Activated T-helper 1 cell treated with anti-CD3 and anti-CD28 coated beads, Interleukin-12 subunit alpha, Interleukin-12 subunit beta, Interleukin-2, Interleukin-4 antibody, amounts not matched to agents 30 ng/mL and 10 ng/mL and 1 ng/mL, durations not matched to agents 14 hours and 24 hours and 36 hours (primary cell): ENCODE measurements at regions of chr6 and their contacts with region 1.

Region 1: DNA sequence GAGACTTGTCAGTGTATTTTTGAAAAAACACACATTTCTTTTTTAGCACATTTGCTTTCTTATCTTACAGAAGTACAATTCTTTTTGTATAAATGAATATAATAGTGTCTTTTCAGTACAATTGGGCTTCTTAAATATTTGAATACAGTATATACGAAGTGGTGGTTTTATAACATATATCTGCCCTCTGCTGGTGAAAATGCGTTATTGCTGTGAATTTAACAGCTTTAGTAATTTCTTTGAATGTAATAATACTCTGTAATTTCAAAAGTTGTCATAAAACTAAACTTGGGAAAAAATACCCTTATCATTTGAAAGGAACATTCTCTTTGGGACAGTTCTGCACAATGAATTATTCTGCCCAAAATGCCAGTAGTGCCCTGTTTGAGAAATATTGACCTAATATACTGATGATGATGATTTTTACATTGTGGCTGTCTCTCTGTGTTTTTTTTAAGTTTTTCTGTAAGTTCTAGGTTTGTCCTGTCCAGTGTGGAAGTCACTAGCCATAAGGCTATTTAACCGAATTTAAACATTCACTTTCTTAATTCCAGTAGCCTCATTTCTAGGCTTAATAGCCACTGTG is 19.0 kb downstream of the SMAP1 start:
- DNase-seq: no peak
- H3K4me3 Mint-ChIP-seq: no peak overlapping the region
- H3K27ac Mint-ChIP-seq: no peak overlapping the region
- H3K4me1 Mint-ChIP-seq: peaks cover 42% of the 10 kb centered on the region
- H3K27me3 Mint-ChIP-seq: no peaks in the 10 kb centered on the region

Region 2: GRCh38 chr6:70310063-70310694 is 376.5 kb before region 1 on chr6:
- intact Hi-C with region 1: loop called (anchors 5 kb)
- DNase-seq: no peak
- H3K4me3 Mint-ChIP-seq: no peak overlapping the region
- H3K27ac Mint-ChIP-seq: no peak overlapping the region
- H3K4me1 Mint-ChIP-seq: peaks cover 6% of the 10 kb centered on the region
- H3K27me3 Mint-ChIP-seq: peaks cover 4% of the 10 kb centered on the region

Region 3: DNA sequence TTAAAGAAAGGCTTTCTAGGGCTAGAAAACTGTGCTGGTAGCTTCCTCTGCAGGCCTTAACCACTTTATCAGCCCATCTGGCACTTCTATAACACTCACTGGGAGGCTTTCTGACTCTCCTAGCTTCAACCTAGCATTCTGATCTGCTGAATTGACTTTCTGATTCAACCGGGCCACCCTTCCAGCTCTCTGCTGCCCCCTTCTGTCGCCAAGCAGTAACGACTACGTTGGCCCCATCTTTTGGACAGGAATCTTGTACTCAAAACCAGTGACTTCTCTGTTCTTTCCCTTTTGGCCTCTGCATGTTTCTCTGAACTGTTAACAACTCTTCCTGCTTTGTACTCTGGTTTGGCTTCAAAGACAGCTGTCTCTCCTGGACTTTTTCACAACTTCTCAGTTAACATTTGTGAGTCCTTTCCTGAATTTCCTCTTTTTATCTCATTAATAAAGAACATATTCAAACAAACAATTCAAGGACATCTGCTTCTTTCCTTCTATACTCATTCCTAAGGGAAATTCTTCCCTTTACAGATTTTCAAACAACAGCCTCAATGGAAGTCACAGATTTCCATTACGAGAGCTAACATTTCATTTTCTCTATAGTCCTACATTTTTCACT is 317.2 kb before region 1 on chr6:
- intact Hi-C with region 1: loop called (anchors 1 kb)
- DNase-seq: peak; percentile 43
- H3K4me3 Mint-ChIP-seq: no peak overlapping the region
- H3K27ac Mint-ChIP-seq: no peak overlapping the region
- H3K4me1 Mint-ChIP-seq: no peaks in the 10 kb centered on the region
- H3K27me3 Mint-ChIP-seq: peaks cover 24% of the 10 kb centered on the region

Region 4: GRCh38 chr6:70520575-70520974 is 166.1 kb before region 1 on chr6:
- intact Hi-C with region 1: loop called (anchors 1 kb)
- DNase-seq: no peak
- H3K4me3 Mint-ChIP-seq: no peak overlapping the region
- H3K27ac Mint-ChIP-seq: no peak overlapping the region
- H3K4me1 Mint-ChIP-seq: peaks cover 7% of the 10 kb centered on the region
- H3K27me3 Mint-ChIP-seq: no peaks in the 10 kb centered on the region

Region 5: DNA sequence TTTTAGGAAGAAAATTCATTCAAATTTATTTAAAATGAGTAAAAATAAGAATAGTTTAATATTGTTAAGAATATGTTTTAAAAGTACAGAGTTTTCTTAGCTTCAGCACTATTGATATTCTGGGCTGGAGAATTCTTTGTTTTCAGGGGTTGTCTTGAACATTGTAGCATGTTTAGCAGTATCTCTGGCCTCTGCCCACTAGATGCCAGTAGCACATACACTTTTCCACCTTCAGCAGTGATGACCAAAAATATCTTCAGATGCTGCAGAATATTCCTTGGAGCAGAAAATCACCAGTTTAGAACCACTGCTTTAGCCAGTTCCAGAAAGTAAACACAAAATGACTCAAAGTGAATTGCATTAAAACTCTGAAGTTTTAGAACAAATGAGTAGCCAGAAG is 139.3 kb before region 1 on chr6:
- intact Hi-C with region 1: loop called (anchors 1 kb)
- DNase-seq: no peak
- H3K4me3 Mint-ChIP-seq: no peak overlapping the region
- H3K27ac Mint-ChIP-seq: no peak overlapping the region
- H3K4me1 Mint-ChIP-seq: no peaks in the 10 kb centered on the region
- H3K27me3 Mint-ChIP-seq: peaks cover 2% of the 10 kb centered on the region

Region 6: GRCh38 chr6:70667711-70668498 is 18.7 kb before region 1 on chr6 and contains the start of gene SMAP1:
- intact Hi-C with region 1: loop called (anchors 1 kb)
- DNase-seq: peak; percentile 91
- H3K4me3 Mint-ChIP-seq: peak within 1 kb of the TSS; percentile 90
- H3K27ac Mint-ChIP-seq: peak within 1 kb of the TSS; percentile 92
- H3K4me1 Mint-ChIP-seq: peaks cover 59% of the 10 kb centered on the region
- H3K27me3 Mint-ChIP-seq: no peaks in the 10 kb centered on the region
- total RNA-seq, gene SMAP1: 24.3 and 26.3 TPM in 2 replicates

Region 7: GRCh38 chr6:70673601-70674000 is 13.0 kb before region 1 on chr6:
- intact Hi-C with region 1: loop called (anchors 1 kb)
- DNase-seq: no peak
- H3K4me3 Mint-ChIP-seq: no peak overlapping the region
- H3K27ac Mint-ChIP-seq: no peak overlapping the region
- H3K4me1 Mint-ChIP-seq: peaks cover 57% of the 10 kb centered on the region
- H3K27me3 Mint-ChIP-seq: no peaks in the 10 kb centered on the region

Region 8: DNA sequence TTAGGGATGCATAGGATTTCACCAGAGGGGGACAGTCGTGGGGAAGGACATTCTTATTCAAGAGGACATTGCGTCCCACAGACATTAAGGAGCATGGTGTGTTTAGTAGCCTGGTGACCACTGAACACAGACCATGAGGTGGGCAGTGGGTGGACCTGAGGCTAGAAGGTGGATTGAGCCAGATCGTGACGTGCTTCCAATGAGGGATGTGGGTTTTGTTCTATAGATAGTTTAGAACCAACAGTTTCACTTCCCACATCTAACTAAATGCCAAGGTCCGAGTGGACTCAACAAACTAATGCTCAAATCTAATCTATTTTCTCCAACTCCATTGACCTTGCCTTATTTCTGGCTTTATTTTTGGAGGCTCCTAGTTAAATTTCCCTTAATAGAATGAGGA is 660.5 kb after region 1 on chr6:
- intact Hi-C with region 1: no loop called
- DNase-seq: no peak
- H3K4me3 Mint-ChIP-seq: no peak overlapping the region
- H3K27ac Mint-ChIP-seq: no peak overlapping the region
- H3K4me1 Mint-ChIP-seq: no peaks in the 10 kb centered on the region
- H3K27me3 Mint-ChIP-seq: peaks cover 1% of the 10 kb centered on the region